ENCODE measurements at regions of chr19 and their contacts with region 1.

Region 1: DNA sequence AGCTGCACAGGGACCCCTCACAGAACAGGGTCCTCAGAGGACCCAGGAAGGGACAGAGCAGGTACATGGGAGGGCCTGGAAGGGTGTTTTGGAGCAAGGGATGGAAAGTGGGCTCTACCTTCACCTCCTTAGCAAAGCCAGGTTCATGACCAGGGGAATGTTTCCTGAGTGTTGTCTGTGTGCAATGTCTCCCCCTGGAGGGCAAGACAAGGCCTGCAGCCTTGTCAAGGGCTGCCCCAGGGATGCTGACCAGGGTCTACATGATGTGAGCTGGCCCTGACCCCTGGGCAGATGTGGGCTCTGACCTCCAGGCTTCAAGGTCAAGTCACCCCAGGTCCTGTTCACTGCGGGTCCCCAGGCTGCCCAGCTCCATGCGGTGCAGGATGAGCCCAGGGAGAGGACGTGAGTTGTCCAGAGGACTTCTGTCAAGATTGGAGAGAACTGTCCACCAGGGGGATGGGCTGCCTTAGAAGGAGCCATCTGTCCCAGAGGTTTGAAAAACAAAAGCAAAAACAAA is 1.0 kb upstream of the CEACAM1 start:
- DNase-seq: peak; percentile 56 to 64
- H3K4me3 ChIP-seq: no peak overlapping the region
- H3K27ac ChIP-seq: peak overlapping the region in 1 of 3 donors; percentile 68
- H3K4me1 ChIP-seq: peaks cover 0 to 8% of the 10 kb centered on the region in 2 donors
- H3K27me3 ChIP-seq: no peaks in the 10 kb centered on the region
- CTCF ChIP-seq: peak; percentile 50 to 92 (median 80)
- POLR2A ChIP-seq: no peak

Region 2: GRCh38 chr19:42450314-42450934 is 78.9 kb before region 1 on chr19:
- intact Hi-C with region 1: loop called (anchors 2 kb)
- DNase-seq: peak; percentile 88
- H3K4me3 ChIP-seq: no peak overlapping the region
- H3K27ac ChIP-seq: peak overlapping the region in 1 of 3 donors; percentile 1
- H3K4me1 ChIP-seq: no peaks in the 10 kb centered on the region
- H3K27me3 ChIP-seq: no peaks in the 10 kb centered on the region
- CTCF ChIP-seq: peak; percentile 54 to 98 (median 86)
- POLR2A ChIP-seq: no peak

Measured in thyroid gland (tissue), 4 donors.